IMR-90 (cell line): ENCODE measurements at regions of chr2 and their contacts with region 1.

Region 1: DNA sequence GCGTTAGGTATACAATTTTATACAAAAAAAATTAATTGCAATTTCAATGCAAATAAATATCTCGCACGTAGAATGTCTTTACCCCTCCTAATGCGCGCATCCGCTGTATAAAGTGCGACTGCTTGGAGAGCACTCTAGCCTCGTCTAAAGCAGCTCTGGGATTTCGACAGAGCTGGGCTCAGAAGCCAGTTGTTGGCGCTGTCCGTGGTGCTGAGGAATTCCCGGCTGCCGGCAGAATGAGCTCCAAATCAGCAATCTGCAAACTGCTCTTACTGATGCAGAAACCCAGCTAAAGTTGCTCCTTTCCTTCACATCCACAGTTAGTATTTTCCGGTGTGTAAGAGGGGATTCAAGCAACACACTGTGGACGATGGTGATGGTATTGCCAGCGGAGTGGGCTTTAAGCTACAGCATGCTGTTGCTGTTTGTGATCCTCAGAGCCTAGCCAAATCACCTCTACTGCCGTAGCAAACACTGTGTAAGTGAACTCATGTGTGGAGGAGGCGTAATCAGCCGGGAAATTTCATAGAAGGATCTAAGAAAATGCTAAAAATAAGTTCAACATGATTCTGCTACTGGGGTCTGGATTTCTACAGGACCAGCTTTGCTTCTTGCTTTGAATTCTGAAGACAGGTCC is at the start of gene VWC2L:
- DNase-seq: peak; percentile 76
- ATAC-seq: peak; percentile 99
- H3K4me3 ChIP-seq: no peak within 1 kb of the TSS
- H3K27ac ChIP-seq: no peak within 1 kb of the TSS
- H3K4me1 ChIP-seq: no peaks in the 10 kb centered on the region
- H3K27me3 ChIP-seq: no peaks in the 10 kb centered on the region
- CTCF ChIP-seq: no peak
- POLR2A ChIP-seq: no peak
- RAD21 ChIP-seq: peak; percentile 27; the same call in 1 of the 2 replicates
- total RNA-seq, gene VWC2L: not detected in 2 replicates

Region 2: DNA sequence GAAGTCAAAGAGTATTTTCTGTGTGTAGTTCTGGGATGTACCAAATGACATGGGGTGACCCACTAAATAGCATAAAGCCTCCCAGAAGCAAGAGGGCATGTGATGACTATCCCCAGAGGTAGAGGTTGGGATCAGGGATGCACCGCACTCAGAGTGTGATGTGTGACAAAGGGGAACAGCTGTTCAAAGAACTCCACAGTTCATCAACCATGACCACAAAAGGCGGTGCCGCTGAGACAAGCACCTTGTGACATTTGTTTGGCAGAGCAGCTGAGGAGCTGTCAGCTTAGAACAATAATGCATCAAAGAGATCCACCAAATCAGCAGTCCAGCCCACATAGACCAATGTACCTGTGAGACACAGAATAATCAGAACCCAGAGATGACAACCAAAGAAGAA is 81.1 kb after region 1 on chr2:
- CTCF ChIA-PET with region 1: no interaction called
- POLR2A ChIA-PET with region 1: no interaction called
- dilution Hi-C with region 1: no loop called
- in situ Hi-C with region 1: no loop called
- intact Hi-C with region 1: no loop called
- DNase-seq: no peak
- ATAC-seq: no peak
- H3K4me3 ChIP-seq: no peak overlapping the region
- H3K27ac ChIP-seq: no peak overlapping the region
- H3K4me1 ChIP-seq: no peaks in the 10 kb centered on the region
- H3K27me3 ChIP-seq: no peaks in the 10 kb centered on the region
- CTCF ChIP-seq: no peak
- POLR2A ChIP-seq: no peak
- RAD21 ChIP-seq: no peak

Region 3: GRCh38 chr2:214995926-214996670 is 585.1 kb after region 1 on chr2:
- CTCF ChIA-PET with region 1: no interaction called
- POLR2A ChIA-PET with region 1: no interaction called
- dilution Hi-C with region 1: no loop called
- in situ Hi-C with region 1: no loop called
- intact Hi-C with region 1: loop called (anchors 10 kb)
- DNase-seq: no peak
- ATAC-seq: no peak
- H3K4me3 ChIP-seq: no peak overlapping the region
- H3K27ac ChIP-seq: no peak overlapping the region
- H3K4me1 ChIP-seq: no peaks in the 10 kb centered on the region
- H3K27me3 ChIP-seq: no peaks in the 10 kb centered on the region; the same call in 1 of the 2 replicates
- CTCF ChIP-seq: no peak
- POLR2A ChIP-seq: no peak
- RAD21 ChIP-seq: no peak